ENCODE measurements at regions of chr9 and their contacts with region 1.

Region 1: DNA sequence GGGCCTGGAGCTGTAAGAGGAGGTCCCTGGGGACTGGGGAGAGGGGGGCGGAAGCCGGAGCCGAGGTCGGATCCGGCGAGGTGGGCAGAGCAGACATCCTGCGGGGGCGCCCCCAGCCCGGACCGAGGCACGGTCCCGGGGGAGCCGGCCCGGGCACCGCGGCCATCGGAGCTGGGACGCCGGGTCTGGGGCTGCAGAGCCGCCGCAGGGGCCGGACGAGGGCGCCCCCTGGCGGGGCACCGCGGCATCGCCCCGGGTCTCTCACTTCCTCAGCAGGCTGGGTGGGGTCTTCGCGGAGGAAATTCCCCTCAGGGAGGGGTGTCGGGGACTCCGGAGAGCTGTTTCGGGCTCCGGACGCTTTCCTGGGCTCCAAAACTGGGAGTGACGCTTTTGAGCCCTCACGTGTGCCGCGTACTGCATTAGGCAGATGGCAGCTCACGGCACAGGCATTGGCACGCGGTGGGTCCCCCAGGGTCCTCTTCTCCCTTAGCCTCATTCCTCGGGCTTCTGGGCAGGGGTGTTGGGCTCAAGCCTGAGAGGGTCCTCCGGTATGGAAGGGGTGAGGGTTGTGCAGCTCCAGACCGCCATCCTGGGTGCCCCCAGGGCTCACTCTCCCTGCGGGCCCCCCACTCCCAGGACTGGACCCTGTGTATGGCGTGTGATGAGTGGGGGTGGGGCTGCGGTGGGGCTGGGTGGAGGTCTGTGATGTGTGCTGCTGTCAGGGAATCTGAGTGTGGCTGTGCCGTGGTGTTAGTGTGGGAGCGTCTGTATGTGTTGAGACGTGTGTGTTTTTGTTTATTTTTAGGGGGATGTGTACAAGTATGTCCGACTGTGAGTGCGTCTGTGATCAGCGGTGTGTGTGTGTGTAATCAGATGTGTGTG is 29.6 kb downstream of the LHX2 start:
- DNase-seq: peak in 1 of 2 experiments; percentile 82
- ATAC-seq: peak; percentile 64 to 82
- H3K4me3 ChIP-seq: peak overlapping the region; percentile 60
- H3K27ac ChIP-seq: peak overlapping the region; percentile 76 to 85
- H3K4me1 ChIP-seq: peaks cover 11% of the 10 kb centered on the region; the same call in 2 of the 3 replicates
- CTCF ChIP-seq: peak; percentile 97
- EP300 ChIP-seq: no peak
- POLR2A ChIP-seq: no peak
- RAD21 ChIP-seq: peak; percentile 69 to 96

Region 2: GRCh38 chr9:123544007-123544827 is 497.0 kb before region 1 on chr9:
- CTCF ChIA-PET with region 1: interaction called, 160 read pairs
- POLR2A ChIA-PET with region 1: no interaction called
- DNase-seq: peak; percentile 33 to 44
- ATAC-seq: peak in 1 of 2 experiments; percentile 78; a peak in 3 of 6 replicates
- H3K4me3 ChIP-seq: no peak overlapping the region
- H3K27ac ChIP-seq: no peak overlapping the region
- H3K4me1 ChIP-seq: no peaks in the 10 kb centered on the region
- CTCF ChIP-seq: peak; percentile 98
- EP300 ChIP-seq: no peak
- POLR2A ChIP-seq: no peak
- RAD21 ChIP-seq: peak; percentile 93 to 97

Region 3: DNA sequence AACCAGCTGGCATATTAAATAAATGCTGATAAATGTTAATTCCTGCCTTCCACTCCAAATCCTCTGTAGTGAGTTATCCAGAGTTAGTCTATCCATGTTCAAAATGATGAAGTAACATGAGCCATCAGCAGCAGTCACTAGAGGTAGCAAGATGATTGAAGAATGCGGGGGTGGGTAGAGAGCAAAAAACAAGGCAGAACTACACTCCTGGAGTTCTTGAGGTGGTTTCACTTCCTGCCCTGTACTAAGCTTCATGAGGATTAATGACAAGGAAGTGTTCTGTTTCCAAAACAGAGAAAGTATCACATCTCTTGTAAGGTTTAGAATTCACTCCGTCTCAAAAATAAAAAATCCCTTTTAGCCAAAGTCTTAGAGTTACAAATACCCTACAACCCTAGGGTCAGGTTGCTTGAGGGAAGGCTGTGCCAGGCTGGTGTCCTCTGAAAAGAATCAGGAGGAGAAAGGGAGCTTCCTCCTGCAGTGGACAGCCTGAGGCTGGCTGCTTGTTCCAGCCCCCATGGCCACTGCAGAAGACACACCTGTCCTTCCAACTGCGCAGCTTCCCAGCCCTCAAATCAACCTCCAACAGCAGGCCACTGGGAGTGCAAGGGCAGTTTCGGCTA is 291.5 kb before region 1 on chr9:
- CTCF ChIA-PET with region 1: no interaction called
- POLR2A ChIA-PET with region 1: no interaction called
- DNase-seq: no peak
- ATAC-seq: no peak
- H3K4me3 ChIP-seq: no peak overlapping the region
- H3K27ac ChIP-seq: no peak overlapping the region
- H3K4me1 ChIP-seq: no peaks in the 10 kb centered on the region; the same call in 2 of the 3 replicates
- CTCF ChIP-seq: no peak
- EP300 ChIP-seq: no peak
- POLR2A ChIP-seq: no peak
- RAD21 ChIP-seq: no peak

Region 4: DNA sequence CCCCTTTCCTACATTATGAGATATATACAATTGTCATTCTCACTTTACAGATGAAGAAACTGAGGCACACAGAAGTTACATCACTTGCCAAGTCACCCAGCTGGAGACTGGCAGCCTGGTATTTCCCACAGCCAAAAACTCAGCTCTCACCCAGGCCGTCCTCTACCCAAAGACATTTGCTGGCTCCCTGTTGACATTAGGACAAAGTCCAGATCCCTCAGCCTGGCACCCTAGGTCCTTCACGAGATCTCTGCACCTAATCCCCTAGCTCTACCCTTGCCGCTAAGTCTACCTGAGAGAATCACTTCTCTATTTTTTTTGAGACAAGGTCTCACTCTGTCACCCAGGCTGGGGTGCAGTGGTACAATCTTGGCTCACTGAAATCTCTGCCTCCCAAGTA is 56.4 kb before region 1 on chr9:
- CTCF ChIA-PET with region 1: interaction called, 10 read pairs
- POLR2A ChIA-PET with region 1: no interaction called
- DNase-seq: no peak
- ATAC-seq: no peak
- H3K4me3 ChIP-seq: no peak overlapping the region
- H3K27ac ChIP-seq: no peak overlapping the region
- H3K4me1 ChIP-seq: no peaks in the 10 kb centered on the region
- CTCF ChIP-seq: no peak
- EP300 ChIP-seq: no peak
- POLR2A ChIP-seq: no peak
- RAD21 ChIP-seq: no peak

Region 5: GRCh38 chr9:124011420-124012301 is 29.5 kb before region 1 on chr9 and contains the start of gene LHX2:
- CTCF ChIA-PET with region 1: interaction called, 22 read pairs
- POLR2A ChIA-PET with region 1: no interaction called
- DNase-seq: peak; percentile 81 to 95
- ATAC-seq: peak; percentile 91 to 97
- H3K4me3 ChIP-seq: peak within 1 kb of the TSS; percentile 65
- H3K27ac ChIP-seq: peak within 1 kb of the TSS; percentile 79 to 88
- H3K4me1 ChIP-seq: peaks cover 18% of the 10 kb centered on the region
- CTCF ChIP-seq: peak; percentile 32
- EP300 ChIP-seq: no peak
- POLR2A ChIP-seq: peak; percentile 17; the same call in 1 of the 2 replicates
- RAD21 ChIP-seq: peak in 1 of 2 experiments; percentile 30; a peak in 1 of 5 replicates
- polyA plus RNA-seq, gene LHX2: 2.4 and 2.9 TPM in 2 replicates

Region 6: DNA sequence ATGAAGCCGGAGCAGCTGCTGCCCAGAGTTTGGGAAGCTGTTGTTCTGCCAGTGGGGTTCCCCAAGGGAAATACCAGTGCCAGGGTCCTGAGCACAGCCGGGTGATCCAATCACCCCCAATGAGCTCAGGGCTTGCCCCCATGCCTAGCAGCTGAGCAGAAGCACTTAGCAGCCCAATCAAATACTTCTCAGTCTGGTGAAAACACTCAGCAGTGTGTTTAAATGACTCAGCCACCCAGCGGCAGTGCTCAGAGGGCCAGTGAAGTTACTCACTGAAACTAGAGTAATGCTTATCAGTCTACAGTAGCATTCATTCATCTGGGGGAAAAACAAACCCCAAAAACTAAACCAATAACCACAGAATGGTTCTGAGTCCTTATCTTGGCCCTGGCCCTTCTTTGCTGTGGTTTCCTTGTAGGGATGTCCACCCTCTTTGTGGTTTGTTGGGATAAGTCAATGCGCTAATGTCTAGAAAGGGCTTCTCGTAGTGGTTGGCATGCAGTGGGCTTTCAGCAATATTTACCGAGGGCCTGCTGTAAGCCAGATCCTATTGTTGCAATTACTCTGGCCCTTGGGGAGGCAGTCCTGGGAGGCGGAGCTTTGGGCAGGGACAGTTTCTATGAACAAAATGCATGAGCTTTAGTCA is 13.5 kb after region 1 on chr9:
- CTCF ChIA-PET with region 1: interaction called, 125 read pairs
- POLR2A ChIA-PET with region 1: no interaction called
- DNase-seq: peak in 1 of 2 experiments; percentile 36
- ATAC-seq: peak; percentile 92 to 96
- H3K4me3 ChIP-seq: no peak overlapping the region
- H3K27ac ChIP-seq: peak overlapping the region in 1 of 2 experiments; percentile 52; a peak in 2 of 6 replicates
- H3K4me1 ChIP-seq: peaks cover 9% of the 10 kb centered on the region; the same call in 2 of the 3 replicates
- CTCF ChIP-seq: no peak
- EP300 ChIP-seq: no peak
- POLR2A ChIP-seq: no peak
- RAD21 ChIP-seq: no peak

Measured in A549 (cell line).